Gastrocnemius medialis (tissue), 4 donors: ENCODE measurements at regions of chr11 and their contacts with region 1.

Region 1: GRCh38 chr11:57237204-57237681 is at the start of gene APLNR:
- DNase-seq: no peak
- ATAC-seq: peak in 1 of 2 donors; percentile 20
- H3K4me3 ChIP-seq: peak within 1 kb of the TSS in 3 of 4 donors; percentile 6 to 35 (median 25)
- H3K27ac ChIP-seq: peak within 1 kb of the TSS in 3 of 4 donors; percentile 36 to 70 (median 50)
- H3K4me1 ChIP-seq: no peaks in the 10 kb centered on the region
- H3K27me3 ChIP-seq: no peaks in the 10 kb centered on the region
- CTCF ChIP-seq: no peak
- POLR2A ChIP-seq: no peak
- total RNA-seq, gene APLNR: 0.32 to 3.7 (median 0.64) TPM

Region 2: GRCh38 chr11:57116654-57117053 is 120.6 kb before region 1 on chr11:
- in situ Hi-C with region 1: loop called in 1 of 4 experiments (anchors 5 kb)
- intact Hi-C with region 1: no loop called
- DNase-seq: no peak
- ATAC-seq: peak; percentile 41 to 74
- H3K4me3 ChIP-seq: no peak overlapping the region
- H3K27ac ChIP-seq: no peak overlapping the region
- H3K4me1 ChIP-seq: peaks cover 0 to 1% of the 10 kb centered on the region in 2 donors
- H3K27me3 ChIP-seq: no peaks in the 10 kb centered on the region
- CTCF ChIP-seq: peak; percentile 41 to 55 (median 51)
- POLR2A ChIP-seq: no peak

Region 3: GRCh38 chr11:57203359-57203758 is 33.9 kb before region 1 on chr11:
- in situ Hi-C with region 1: no loop called
- intact Hi-C with region 1: loop called (anchors 5 kb)
- DNase-seq: peak; percentile 43 to 63
- ATAC-seq: peak; percentile 60 to 73
- H3K4me3 ChIP-seq: no peak overlapping the region
- H3K27ac ChIP-seq: peak overlapping the region; percentile 35 to 59 (median 48)
- H3K4me1 ChIP-seq: peaks cover 24 to 39% of the 10 kb centered on the region in 2 donors
- H3K27me3 ChIP-seq: no peaks in the 10 kb centered on the region
- CTCF ChIP-seq: no peak
- POLR2A ChIP-seq: no peak